Activated CD4-positive, alpha-beta T cell treated with anti-CD3 and anti-CD28 coated beads, Interleukin-2, amount 10 ng/mL, durations not matched to agents 24 days and 14 days (primary cell): ENCODE measurements at regions of chr1 and their contacts with region 1.

Region 1: GRCh38 chr1:229440851-229441537 is 7.1 kb upstream of the ACTA1 start:
- DNase-seq: peak; percentile 77
- H3K4me3 Mint-ChIP-seq: peak overlapping the region; percentile 52
- H3K27ac Mint-ChIP-seq: peak overlapping the region; percentile 81
- H3K4me1 Mint-ChIP-seq: peaks cover 24% of the 10 kb centered on the region
- H3K27me3 Mint-ChIP-seq: peaks cover 17% of the 10 kb centered on the region

Region 2: DNA sequence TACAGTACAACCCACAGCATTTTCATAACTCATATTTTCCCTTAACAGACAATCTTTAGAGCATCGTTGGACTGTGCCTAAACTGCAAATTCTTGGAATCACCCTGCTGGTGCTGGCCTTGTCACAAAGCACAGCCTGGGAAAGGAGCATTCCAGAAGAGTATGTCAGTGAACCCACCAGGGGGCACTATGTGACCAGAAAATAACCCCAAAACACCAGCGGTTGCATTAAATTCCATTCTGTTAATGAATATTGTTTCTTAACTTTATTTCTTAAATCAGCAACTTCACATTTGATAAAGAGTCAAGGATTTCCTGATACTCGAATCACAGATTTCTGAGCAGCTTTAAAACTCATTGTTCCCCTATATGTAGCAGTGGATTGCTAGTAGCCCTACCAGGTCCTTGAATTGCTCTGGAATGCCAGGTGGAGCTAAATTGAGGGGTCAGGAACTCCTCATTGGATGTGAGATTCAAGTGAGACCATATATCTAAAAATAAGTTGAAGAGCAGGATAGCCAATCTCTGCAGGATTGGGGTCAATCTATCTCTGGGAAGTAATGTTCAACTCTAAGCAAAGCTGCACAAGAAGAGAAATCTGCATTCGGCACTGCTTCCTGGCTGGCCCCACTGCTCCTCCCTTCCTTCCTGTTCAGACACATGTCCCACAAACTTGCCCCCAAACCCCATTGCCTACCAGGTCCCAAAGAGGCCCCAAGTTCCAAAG is 182.8 kb before region 1 on chr1:
- intact Hi-C with region 1: loop called (anchors 1 kb)
- DNase-seq: peak; percentile 89
- H3K4me3 Mint-ChIP-seq: no peak overlapping the region
- H3K27ac Mint-ChIP-seq: peak overlapping the region; percentile 24
- H3K4me1 Mint-ChIP-seq: peaks cover 27% of the 10 kb centered on the region
- H3K27me3 Mint-ChIP-seq: peaks cover 9% of the 10 kb centered on the region

Region 3: GRCh38 chr1:229270547-229271447 is 170.2 kb before region 1 on chr1 and contains the start of gene RAB4A:
- intact Hi-C with region 1: loop called (anchors 5 kb)
- DNase-seq: peak; percentile 95
- H3K4me3 Mint-ChIP-seq: peak within 1 kb of the TSS; percentile 91
- H3K27ac Mint-ChIP-seq: peak within 1 kb of the TSS; percentile 83
- H3K4me1 Mint-ChIP-seq: peaks cover 20% of the 10 kb centered on the region
- H3K27me3 Mint-ChIP-seq: no peaks in the 10 kb centered on the region
- total RNA-seq, gene RAB4A: 30.7 and 34.8 TPM in 2 replicates

Region 4: GRCh38 chr1:229341774-229342655 is 99.0 kb before region 1 on chr1:
- intact Hi-C with region 1: loop called (anchors 1 kb)
- DNase-seq: peak; percentile 96
- H3K4me3 Mint-ChIP-seq: peak overlapping the region; percentile 91
- H3K27ac Mint-ChIP-seq: peak overlapping the region; percentile 94
- H3K4me1 Mint-ChIP-seq: peaks cover 48% of the 10 kb centered on the region
- H3K27me3 Mint-ChIP-seq: peaks cover 20% of the 10 kb centered on the region

Region 5: DNA sequence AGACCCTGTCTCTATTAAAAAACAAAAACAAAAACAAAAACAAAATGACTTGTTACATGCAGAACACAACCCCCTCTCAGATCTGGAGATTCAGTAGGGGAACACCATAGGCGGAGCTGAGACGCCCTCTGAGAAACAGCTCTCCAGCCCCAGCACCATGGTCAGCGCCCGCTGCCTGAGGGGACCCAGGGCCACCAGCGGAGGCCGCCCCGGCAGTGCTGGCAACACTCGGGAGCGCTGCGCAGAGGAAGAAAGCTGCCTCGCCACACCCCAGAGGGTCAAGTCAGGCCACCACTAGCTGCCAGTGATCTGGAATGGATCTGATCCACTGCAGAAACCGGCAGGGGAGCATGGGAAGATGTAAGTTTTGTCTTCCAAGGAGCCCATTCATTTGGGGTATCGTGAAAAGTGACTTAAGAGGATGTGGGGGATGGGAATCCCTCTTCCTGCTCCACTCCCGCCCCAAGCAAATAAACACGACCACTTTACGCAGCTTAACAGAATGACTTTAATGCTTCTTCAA is 10.2 kb before region 1 on chr1:
- intact Hi-C with region 1: loop called (anchors 1 kb)
- DNase-seq: peak; percentile 81
- H3K4me3 Mint-ChIP-seq: peak overlapping the region; percentile 64
- H3K27ac Mint-ChIP-seq: peak overlapping the region; percentile 77
- H3K4me1 Mint-ChIP-seq: peaks cover 12% of the 10 kb centered on the region
- H3K27me3 Mint-ChIP-seq: peaks cover 78% of the 10 kb centered on the region

Region 6: DNA sequence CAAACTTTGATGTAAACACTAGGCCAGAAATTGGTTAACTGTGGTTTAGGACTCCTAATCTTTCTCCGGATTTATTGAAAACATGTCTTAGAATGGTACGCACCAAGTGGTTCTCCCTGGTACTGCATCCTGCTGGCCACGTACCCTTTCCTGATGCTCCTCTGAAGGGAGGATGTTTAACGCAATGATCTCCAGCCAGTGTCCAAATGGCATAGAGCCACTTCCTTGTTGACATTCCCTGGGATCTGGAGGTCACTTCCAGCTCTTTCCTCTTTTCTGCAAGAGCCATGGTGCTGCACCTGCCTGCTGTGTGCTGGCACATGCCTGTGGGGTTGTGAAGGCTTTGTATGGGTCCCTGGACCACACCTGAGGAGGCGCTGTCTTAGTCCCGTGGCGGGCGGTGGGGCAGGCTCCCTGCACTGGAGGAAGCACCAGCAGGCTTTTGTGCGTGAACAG is 680.0 kb after region 1 on chr1:
- intact Hi-C with region 1: loop called (anchors 10 kb)
- DNase-seq: no peak
- H3K4me3 Mint-ChIP-seq: no peak overlapping the region
- H3K27ac Mint-ChIP-seq: no peak overlapping the region
- H3K4me1 Mint-ChIP-seq: peaks cover 64% of the 10 kb centered on the region
- H3K27me3 Mint-ChIP-seq: no peaks in the 10 kb centered on the region

Region 7: GRCh38 chr1:230542054-230542453 is 1101.1 kb after region 1 on chr1:
- intact Hi-C with region 1: loop called (anchors 5 kb)
- DNase-seq: peak; percentile 81
- H3K4me3 Mint-ChIP-seq: no peak overlapping the region
- H3K27ac Mint-ChIP-seq: peak overlapping the region; percentile 22
- H3K4me1 Mint-ChIP-seq: peaks cover 8% of the 10 kb centered on the region
- H3K27me3 Mint-ChIP-seq: peaks cover 1% of the 10 kb centered on the region